ENCODE measurements at regions of chr17 and their contacts with region 1.

Region 1: DNA sequence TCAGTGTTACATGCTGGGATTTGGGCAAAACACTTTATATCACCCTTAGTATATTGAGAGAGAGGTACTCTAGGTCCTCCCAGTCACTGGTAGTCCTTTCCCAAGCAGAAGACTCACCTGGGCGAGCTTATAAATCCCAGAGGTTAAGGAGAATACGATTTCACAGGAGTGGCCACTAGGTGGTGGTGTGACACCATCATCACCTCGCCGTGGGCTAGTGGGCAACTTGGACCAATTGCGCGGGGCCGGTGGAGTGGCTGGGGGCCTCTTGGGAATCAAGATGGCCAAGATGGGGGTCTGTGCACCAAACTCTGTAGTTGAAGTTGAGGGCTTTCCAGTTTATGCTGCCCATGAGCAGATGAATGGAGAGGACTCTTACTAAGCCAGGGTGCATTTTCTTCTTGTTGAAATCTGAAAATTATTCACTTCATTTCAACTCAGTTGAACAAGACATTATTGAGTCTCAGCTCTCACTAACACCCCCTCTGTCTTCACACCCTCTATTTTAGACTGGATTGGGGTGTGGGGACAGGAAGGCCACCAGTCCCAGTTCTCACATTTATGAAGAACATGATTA is 38.2 kb upstream of the PIRT start:
- DNase-seq: peak in 9 of 10 donors; percentile 31 to 92 (median 60)

Region 2: GRCh38 chr17:11144358-11145233 is 268.5 kb after region 1 on chr17:
- intact Hi-C with region 1: loop called (anchors 1 kb)
- DNase-seq: peak in 7 of 10 donors; percentile 20 to 79 (median 41)

Region 3: GRCh38 chr17:11644261-11645212 is 768.5 kb after region 1 on chr17:
- intact Hi-C with region 1: loop called (anchors 2 kb)
- DNase-seq: peak in 8 of 10 donors; percentile 26 to 89 (median 62)

Region 4: DNA sequence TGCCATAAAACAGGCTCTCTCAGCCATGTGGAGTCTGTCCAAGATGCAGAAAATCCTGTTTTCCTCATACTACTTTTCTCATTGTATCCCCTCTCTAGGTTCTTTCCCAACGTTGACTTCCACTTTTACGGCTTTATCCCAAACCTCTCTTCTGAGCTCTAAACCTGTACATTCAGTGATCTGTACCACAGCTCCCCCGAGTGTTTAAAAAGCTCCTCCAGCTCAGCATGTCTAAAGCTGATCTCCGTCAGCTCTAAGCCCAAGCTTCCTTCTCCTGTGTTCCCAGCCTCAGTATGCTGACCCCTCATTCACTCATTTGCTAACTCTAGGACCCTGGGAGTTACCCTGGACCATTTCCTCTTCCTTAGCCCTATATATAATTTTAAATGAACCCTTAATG is 866.8 kb after region 1 on chr17:
- intact Hi-C with region 1: loop called (anchors 5 kb)
- DNase-seq: peak in 1 of 10 donors; percentile 23

Region 5: GRCh38 chr17:11935734-11936406 is 1059.8 kb after region 1 on chr17:
- intact Hi-C with region 1: loop called (anchors 5 kb)
- DNase-seq: peak in 8 of 10 donors; percentile 45 to 94 (median 71)

Region 6: DNA sequence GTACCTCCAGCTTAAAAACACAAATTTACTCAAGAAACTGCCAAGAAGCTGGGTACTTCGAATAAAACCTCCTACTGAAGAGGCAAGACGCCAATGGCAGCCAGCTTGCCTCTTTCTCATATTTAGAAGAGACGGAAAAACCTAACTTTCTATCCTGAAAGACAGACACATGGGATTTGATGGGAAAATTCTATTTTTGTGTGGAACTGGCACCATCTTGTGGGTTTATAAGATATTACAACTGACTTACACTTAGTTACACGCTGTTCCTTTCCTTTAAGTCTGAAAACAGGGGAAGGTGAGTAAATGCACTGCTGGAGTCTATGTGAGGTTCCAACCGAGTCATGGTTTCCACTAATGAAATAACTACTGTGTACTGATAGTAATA is 1110.9 kb after region 1 on chr17:
- intact Hi-C with region 1: loop called (anchors 5 kb)
- DNase-seq: no peak

Measured in posterior cingulate gyrus (tissue), 11 donors.